ENCODE measurements at regions of chr9 and their contacts with region 1.

Region 1: GRCh38 chr9:2241836-2242741 is 226.9 kb downstream of the SMARCA2 start:
- DNase-seq: peak; percentile 89
- ATAC-seq: peak; percentile 95

Region 2: DNA sequence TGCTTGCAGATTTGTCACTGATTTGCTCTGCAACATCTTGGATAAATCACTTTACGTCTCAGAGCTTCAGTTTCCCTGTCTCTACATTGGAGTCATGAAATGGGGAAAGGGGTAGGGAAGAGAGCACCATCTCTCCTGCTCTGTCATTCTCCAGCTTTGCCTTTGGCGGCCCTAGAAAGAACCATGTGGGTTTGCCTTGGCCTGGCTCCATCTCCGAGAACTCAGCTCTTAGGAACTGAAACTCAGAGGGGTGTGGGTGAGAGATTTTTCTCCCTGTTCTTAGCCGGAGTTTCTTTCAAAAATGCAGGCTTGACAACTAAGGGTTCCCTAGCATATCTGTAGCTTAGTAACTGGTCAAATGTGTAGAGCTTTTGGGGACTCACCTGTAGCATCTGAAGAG is 103.4 kb before region 1 on chr9:
- intact Hi-C with region 1: loop called (anchors 5 kb)
- DNase-seq: no peak
- ATAC-seq: no peak

Region 3: GRCh38 chr9:3534614-3535404 is 1292.7 kb after region 1 on chr9:
- intact Hi-C with region 1: no loop called
- DNase-seq: no peak
- ATAC-seq: no peak

Measured in Right ventricle myocardium inferior (tissue), 1 donor.